Common myeloid progenitor, CD34-positive (primary cell): ENCODE measurements at regions of chr6 and their contacts with region 1.

Region 1: DNA sequence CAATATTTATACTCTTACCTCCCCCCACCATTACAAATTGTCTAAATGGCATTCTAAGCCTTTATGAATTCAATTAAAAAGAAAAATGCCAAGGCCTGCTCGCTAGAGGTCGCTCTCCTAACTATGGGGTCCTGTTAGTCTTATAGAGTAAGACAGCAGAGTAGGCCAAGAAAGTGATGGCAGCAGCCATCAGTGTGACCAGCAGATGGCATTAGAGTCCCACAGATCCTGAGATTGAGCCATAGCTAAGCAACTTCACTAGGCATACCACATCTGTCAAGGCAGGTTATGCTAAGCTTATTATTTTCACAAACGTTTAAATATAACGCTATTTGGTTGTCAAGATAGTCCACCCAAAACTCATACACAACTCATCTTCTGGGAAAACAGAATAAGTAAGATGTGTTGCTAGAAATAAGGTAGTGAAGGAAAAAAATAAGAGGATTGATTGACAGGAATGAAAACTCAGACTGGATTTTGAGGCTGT is 57.6 kb upstream of the SCAF8 start:
- DNase-seq: peak; percentile 96 to 99 (median 97)
- H3K4me3 ChIP-seq: no peak overlapping the region
- H3K27ac ChIP-seq: no peak overlapping the region
- H3K4me1 ChIP-seq: no peaks in the 10 kb centered on the region
- H3K27me3 ChIP-seq: no peaks in the 10 kb centered on the region

Region 2: GRCh38 chr6:154649721-154650120 is 25.9 kb before region 1 on chr6:
- CTCF ChIA-PET with region 1: no interaction called
- POLR2A ChIA-PET with region 1: no interaction called
- DNase-seq: no peak
- H3K4me3 ChIP-seq: no peak overlapping the region
- H3K27ac ChIP-seq: no peak overlapping the region
- H3K4me1 ChIP-seq: peaks cover 0 to 19% (median 5%) of the 10 kb centered on the region in 4 experiments
- H3K27me3 ChIP-seq: no peaks in the 10 kb centered on the region

Region 3: GRCh38 chr6:154689493-154690255 is 14.0 kb after region 1 on chr6:
- CTCF ChIA-PET with region 1: interaction called, 25 read pairs
- POLR2A ChIA-PET with region 1: no interaction called
- DNase-seq: no peak
- H3K4me3 ChIP-seq: no peak overlapping the region
- H3K27ac ChIP-seq: no peak overlapping the region
- H3K4me1 ChIP-seq: peaks cover 0 to 4% (median under 1%) of the 10 kb centered on the region in 4 experiments
- H3K27me3 ChIP-seq: no peaks in the 10 kb centered on the region

Region 4: DNA sequence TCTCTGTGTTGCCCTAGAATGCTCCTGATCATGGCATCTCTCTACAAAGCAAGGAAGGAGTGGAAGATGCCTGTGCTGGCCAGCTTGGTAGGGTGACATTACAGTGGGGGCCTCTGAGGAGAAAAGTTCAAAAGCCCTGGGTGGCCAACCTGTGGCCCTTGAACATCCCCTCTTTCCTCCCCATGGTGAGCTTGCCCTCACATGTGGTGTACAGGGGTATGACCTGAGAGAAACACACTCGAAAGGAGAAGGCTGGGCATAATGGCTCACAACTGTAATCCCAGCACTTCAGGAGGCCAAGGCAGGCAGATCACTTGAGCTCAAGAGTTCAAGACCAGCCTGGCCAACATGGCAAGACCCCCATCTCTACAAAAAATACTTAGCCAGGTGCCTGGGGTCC is 21.0 kb after region 1 on chr6:
- CTCF ChIA-PET with region 1: interaction called, 11 read pairs
- POLR2A ChIA-PET with region 1: no interaction called
- DNase-seq: no peak
- H3K4me3 ChIP-seq: no peak overlapping the region
- H3K27ac ChIP-seq: no peak overlapping the region
- H3K4me1 ChIP-seq: no peaks in the 10 kb centered on the region
- H3K27me3 ChIP-seq: no peaks in the 10 kb centered on the region

Region 5: DNA sequence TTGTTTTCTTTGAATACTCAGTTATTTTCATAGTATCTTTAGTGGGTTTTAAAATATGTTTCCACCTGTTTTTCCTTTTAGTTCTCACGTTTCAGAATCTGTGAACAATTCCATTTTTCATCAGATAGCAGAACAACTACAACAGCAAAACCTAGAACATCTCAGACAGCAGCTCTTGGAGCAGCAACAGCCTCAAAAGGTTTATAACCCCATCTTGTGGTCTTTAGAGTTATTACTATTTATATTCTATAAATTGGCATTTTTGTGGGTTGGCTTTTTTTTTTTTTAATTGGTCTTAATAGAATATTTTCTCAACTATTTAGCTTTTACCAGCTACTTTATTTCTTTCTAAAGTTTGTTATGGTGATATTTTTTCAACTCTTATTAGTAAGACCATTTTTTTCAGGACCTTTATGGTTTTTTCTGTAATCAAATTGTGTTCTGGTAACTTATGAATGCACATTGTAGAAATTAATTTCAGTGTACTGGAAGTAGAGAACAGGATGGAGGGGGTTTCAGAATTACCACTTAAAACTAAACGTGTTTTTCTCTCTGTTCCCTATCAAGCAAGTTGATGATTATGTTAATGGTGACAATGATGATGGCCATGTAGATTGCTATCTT is 129.8 kb after region 1 on chr6:
- CTCF ChIA-PET with region 1: interaction called, 192 read pairs
- POLR2A ChIA-PET with region 1: interaction called, 5 read pairs
- DNase-seq: peak; percentile 67 to 83 (median 78)
- H3K4me3 ChIP-seq: no peak overlapping the region
- H3K27ac ChIP-seq: no peak overlapping the region
- H3K4me1 ChIP-seq: no peaks in the 10 kb centered on the region
- H3K27me3 ChIP-seq: no peaks in the 10 kb centered on the region

Region 6: GRCh38 chr6:154814063-154814462 is 138.4 kb after region 1 on chr6:
- CTCF ChIA-PET with region 1: interaction called, 192 read pairs
- POLR2A ChIA-PET with region 1: no interaction called
- DNase-seq: no peak
- H3K4me3 ChIP-seq: no peak overlapping the region
- H3K27ac ChIP-seq: no peak overlapping the region
- H3K4me1 ChIP-seq: no peaks in the 10 kb centered on the region
- H3K27me3 ChIP-seq: no peaks in the 10 kb centered on the region

Region 7: GRCh38 chr6:154937306-154938220 is 261.9 kb after region 1 on chr6:
- CTCF ChIA-PET with region 1: no interaction called
- POLR2A ChIA-PET with region 1: no interaction called
- DNase-seq: no peak
- H3K4me3 ChIP-seq: no peak overlapping the region
- H3K27ac ChIP-seq: no peak overlapping the region
- H3K4me1 ChIP-seq: peaks cover 0 to 6% (median 2%) of the 10 kb centered on the region in 4 experiments
- H3K27me3 ChIP-seq: no peaks in the 10 kb centered on the region